A549 (cell line): ENCODE measurements at regions of chr19 and their contacts with region 1.

Region 1: DNA sequence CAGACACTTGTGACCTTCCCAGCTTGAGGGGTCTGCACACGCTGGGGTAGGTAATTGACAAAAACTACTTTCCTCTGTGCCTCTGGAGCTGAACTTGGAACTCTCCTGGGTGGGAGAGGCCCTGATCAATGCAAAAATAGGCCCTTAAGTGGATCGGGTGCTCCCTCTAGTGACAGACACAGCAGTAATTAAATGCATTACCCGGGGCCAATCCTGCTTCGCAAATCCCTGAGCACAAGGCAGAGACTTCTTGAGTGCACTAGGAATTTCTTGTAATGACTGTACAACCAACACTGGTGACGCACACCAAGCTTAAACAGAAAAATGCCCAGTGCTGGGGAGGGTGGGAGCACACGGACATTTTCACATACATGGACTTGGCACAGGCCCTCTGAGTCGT is 10.6 kb upstream of the UBE2S start:
- DNase-seq: peak; percentile 88 to 91
- ATAC-seq: peak; percentile 94 to 95
- H3K4me3 ChIP-seq: no peak overlapping the region
- H3K27ac ChIP-seq: peak overlapping the region in 1 of 2 experiments; percentile 6; a peak in 1 of 6 replicates
- H3K4me1 ChIP-seq: peaks cover 8% of the 10 kb centered on the region; the same call in 1 of the 3 replicates
- CTCF ChIP-seq: peak; percentile 95
- EP300 ChIP-seq: no peak
- POLR2A ChIP-seq: no peak
- RAD21 ChIP-seq: peak; percentile 97 to 99

Region 2: GRCh38 chr19:55166530-55167268 is 251.5 kb before region 1 on chr19 and contains the start of gene DNAAF3:
- CTCF ChIA-PET with region 1: interaction called, 16 read pairs
- POLR2A ChIA-PET with region 1: no interaction called
- DNase-seq: peak; percentile 99 to 100
- ATAC-seq: peak; percentile 96 to 97
- H3K4me3 ChIP-seq: peak within 1 kb of the TSS; percentile 64
- H3K27ac ChIP-seq: peak within 1 kb of the TSS; percentile 62 to 81
- H3K4me1 ChIP-seq: peaks cover 10% of the 10 kb centered on the region; the same call in 1 of the 3 replicates
- CTCF ChIP-seq: no peak
- EP300 ChIP-seq: no peak
- POLR2A ChIP-seq: no peak
- RAD21 ChIP-seq: no peak
- polyA plus RNA-seq, gene DNAAF3: 3.1 and 4.0 TPM in 2 replicates

Region 3: GRCh38 chr19:55242089-55242916 is 175.9 kb before region 1 on chr19:
- CTCF ChIA-PET with region 1: interaction called, 13 read pairs
- POLR2A ChIA-PET with region 1: no interaction called
- DNase-seq: no peak
- ATAC-seq: no peak
- H3K4me3 ChIP-seq: no peak overlapping the region
- H3K27ac ChIP-seq: no peak overlapping the region
- H3K4me1 ChIP-seq: peaks cover 2% of the 10 kb centered on the region; the same call in 2 of the 3 replicates
- CTCF ChIP-seq: no peak
- EP300 ChIP-seq: no peak
- POLR2A ChIP-seq: no peak
- RAD21 ChIP-seq: no peak

Region 4: GRCh38 chr19:55312621-55313512 is 105.3 kb before region 1 on chr19:
- CTCF ChIA-PET with region 1: interaction called, 17 read pairs
- POLR2A ChIA-PET with region 1: no interaction called
- DNase-seq: no peak
- ATAC-seq: peak; percentile 10 to 16; a peak in 3 of 6 replicates
- H3K4me3 ChIP-seq: no peak overlapping the region
- H3K27ac ChIP-seq: no peak overlapping the region
- H3K4me1 ChIP-seq: no peaks in the 10 kb centered on the region
- CTCF ChIP-seq: no peak
- EP300 ChIP-seq: no peak
- POLR2A ChIP-seq: no peak
- RAD21 ChIP-seq: no peak

Region 5: DNA sequence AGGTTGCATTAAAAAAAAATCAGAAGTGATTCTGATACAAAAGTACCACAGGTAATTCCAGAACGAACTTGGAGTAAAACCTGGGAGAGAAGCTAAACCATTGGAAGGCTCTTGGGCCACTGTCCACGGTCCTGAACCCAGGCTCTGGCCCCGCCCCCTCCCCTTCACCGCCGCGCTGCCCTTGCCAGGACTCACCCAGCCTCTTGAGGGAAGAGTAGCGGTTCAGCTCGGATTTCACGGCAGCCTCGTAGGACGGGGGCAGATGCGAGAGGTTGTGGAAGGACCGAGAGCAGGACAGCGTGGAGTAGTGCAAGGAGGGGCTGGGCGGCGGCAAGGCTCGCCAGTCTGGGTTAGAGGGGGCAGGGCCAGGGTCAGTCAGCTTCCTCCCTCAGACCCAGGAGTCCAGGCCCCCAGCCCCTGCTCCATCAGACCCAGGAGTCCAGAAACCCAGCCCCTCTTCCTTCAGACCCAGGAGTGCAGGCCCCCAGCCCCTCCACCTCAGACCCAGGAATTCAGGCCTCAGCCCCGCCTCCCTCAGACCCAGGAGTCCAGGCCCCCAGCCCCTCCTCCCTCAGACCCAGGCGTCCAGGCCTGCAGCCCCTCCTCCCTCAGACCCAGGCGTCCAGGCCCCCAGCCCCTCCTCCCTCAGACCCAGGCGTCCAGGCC is 19.4 kb after region 1 on chr19:
- CTCF ChIA-PET with region 1: interaction called, 23 read pairs
- POLR2A ChIA-PET with region 1: no interaction called
- DNase-seq: peak; percentile 87 to 89
- ATAC-seq: peak; percentile 72 to 90
- H3K4me3 ChIP-seq: no peak overlapping the region
- H3K27ac ChIP-seq: no peak overlapping the region
- H3K4me1 ChIP-seq: peaks cover 12% of the 10 kb centered on the region
- CTCF ChIP-seq: no peak
- EP300 ChIP-seq: no peak
- POLR2A ChIP-seq: no peak
- RAD21 ChIP-seq: no peak

Region 6: DNA sequence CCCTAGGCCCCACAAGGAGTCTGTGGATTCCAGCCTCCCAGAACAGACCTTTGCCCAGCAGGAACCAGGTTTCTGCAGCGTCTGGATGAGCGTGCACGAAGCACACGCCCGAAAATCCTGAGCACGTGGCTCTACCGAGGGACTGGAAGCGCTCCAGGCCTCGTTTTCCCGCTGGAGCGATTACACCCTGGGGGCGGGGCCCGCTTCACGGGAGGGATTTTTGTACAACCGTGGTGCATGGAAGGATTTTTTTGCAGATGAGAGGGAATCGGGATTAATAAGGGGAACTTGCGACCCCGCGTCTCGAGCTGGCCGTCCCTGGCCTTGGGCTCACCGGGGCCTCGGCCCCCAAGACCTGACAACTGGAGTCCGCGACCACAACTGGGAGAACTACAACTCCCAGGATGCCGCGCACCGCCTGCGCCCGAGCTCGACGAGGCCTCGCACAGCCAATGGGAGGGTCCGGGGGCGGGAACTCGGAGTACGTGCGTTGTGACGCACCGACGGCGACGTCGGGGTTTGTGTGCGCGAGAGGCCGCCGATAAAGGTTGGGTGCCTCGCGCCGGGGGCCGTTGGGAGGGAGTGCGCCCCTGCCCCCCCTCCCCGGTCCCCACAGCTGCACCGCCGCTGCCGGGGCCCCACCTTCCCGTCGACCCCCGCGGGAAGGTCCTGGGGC is 58.1 kb after region 1 on chr19 and contains the start of gene ZNF628:
- CTCF ChIA-PET with region 1: interaction called, 7 read pairs
- POLR2A ChIA-PET with region 1: interaction called, 11 read pairs
- DNase-seq: peak; percentile 99 to 100
- ATAC-seq: peak; percentile 94
- H3K4me3 ChIP-seq: peak within 1 kb of the TSS; percentile 56
- H3K27ac ChIP-seq: peak within 1 kb of the TSS; percentile 84 to 92
- H3K4me1 ChIP-seq: peaks cover 26% of the 10 kb centered on the region
- CTCF ChIP-seq: no peak
- EP300 ChIP-seq: no peak
- POLR2A ChIP-seq: peak; percentile 26; the same call in 1 of the 2 replicates
- RAD21 ChIP-seq: no peak
- polyA plus RNA-seq, gene ZNF628: 0.32 and 0.48 TPM in 2 replicates